PC-3 (cell line): ENCODE measurements at regions of chr6 and their contacts with region 1.

Region 1: DNA sequence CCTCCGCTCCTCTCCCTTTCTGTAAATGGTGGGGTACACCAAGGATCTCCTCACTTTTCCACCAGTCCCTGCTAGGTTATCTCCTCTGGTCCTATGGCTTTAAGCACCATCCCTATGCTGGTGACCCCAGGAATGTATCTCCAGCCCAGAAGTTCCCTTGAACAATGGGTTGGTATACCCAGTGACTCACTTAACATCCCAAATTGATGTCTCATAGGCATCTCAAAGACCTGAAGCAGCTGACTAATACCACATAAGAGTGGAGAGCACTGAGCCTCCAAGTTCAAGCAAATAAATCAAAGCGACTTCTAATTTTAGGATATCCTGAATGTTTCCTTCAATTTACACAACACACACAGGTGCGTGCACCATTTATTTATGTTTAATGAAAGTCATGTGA is 48.3 kb downstream of the ADGRF1 start:
- DNase-seq: peak; percentile 98
- ATAC-seq: peak; percentile 76
- H3K4me3 ChIP-seq: no peak overlapping the region
- H3K27ac ChIP-seq: peak overlapping the region; percentile 84
- H3K4me1 ChIP-seq: peaks cover 73% of the 10 kb centered on the region
- H3K27me3 ChIP-seq: no peaks in the 10 kb centered on the region
- CTCF ChIP-seq: no peak

Region 2: GRCh38 chr6:46419576-46420002 is 574.3 kb before region 1 on chr6:
- CTCF ChIA-PET with region 1: no interaction called
- POLR2A ChIA-PET with region 1: no interaction called
- intact Hi-C with region 1: loop called (anchors 1 kb)
- DNase-seq: peak; percentile 83
- ATAC-seq: 0 out of 2 replicates have a peak, but pooled peaks have one; percentile 43
- H3K4me3 ChIP-seq: no peak overlapping the region
- H3K27ac ChIP-seq: no peak overlapping the region
- H3K4me1 ChIP-seq: peaks cover 8% of the 10 kb centered on the region
- H3K27me3 ChIP-seq: peaks cover 6% of the 10 kb centered on the region; the same call in 1 of the 2 replicates
- CTCF ChIP-seq: peak; percentile 76

Region 3: DNA sequence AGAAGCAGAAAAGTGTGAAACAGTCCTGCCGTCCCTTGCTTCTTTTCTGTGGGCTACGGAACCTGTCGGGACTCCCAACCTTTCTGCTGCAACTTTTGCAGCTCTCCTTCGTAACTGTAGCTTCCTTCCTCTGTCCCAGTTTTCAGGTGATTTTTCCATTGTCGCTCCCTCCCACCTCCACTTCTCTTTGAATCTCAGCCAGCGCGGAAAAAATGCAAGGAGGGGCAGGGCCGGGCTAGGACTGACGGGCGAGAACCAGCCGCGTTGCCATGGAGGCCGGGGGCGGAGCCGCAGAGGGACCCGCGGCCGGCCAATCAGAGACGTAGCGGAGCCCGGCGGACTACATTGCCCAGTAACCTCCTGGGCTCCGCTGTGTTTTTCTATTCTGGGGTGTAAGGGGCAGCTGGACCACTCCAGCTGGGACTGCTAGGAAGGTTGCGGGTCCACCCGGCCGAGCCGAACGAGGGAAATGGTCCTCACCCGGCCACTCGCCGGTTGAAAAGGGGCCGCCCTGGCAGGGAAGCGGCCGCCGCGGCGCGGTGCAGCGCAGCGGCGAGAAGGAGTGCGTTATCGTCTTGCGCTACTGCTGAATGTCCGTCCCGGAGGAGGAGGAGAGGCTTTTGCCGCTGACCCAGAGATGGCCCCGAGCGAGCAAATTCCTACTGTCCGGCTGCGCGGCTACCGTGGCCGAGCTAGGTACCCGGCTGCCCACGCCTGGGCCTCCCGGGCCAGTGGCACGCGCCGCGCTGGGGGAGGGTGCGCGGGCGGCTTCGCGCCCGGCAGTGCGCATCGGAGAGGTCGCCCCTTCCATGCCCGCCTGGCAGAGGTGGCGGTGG is 341.0 kb before region 1 on chr6 and contains the starts of genes CYP39A1 and SLC25A27:
- CTCF ChIA-PET with region 1: no interaction called
- POLR2A ChIA-PET with region 1: no interaction called
- intact Hi-C with region 1: loop called (anchors 2 kb)
- DNase-seq: peak; percentile 96
- ATAC-seq: peak; percentile 97
- H3K4me3 ChIP-seq: peak within 1 kb of the TSS; percentile 91
- H3K27ac ChIP-seq: no peak within 1 kb of the TSS
- H3K4me1 ChIP-seq: peaks cover 27% of the 10 kb centered on the region
- H3K27me3 ChIP-seq: no peaks in the 10 kb centered on the region
- CTCF ChIP-seq: no peak
- total RNA-seq, gene CYP39A1: 0.66 and 1.2 TPM in 2 replicates
- total RNA-seq, gene SLC25A27: 3.8 and 13.6 TPM in 2 replicates

Region 4: GRCh38 chr6:46781478-46782378 is 212.1 kb before region 1 on chr6:
- CTCF ChIA-PET with region 1: no interaction called
- POLR2A ChIA-PET with region 1: interaction called, 3 read pairs
- intact Hi-C with region 1: loop called (anchors 1 kb)
- DNase-seq: peak; percentile 87
- ATAC-seq: peak; percentile 88
- H3K4me3 ChIP-seq: no peak overlapping the region
- H3K27ac ChIP-seq: no peak overlapping the region
- H3K4me1 ChIP-seq: no peaks in the 10 kb centered on the region
- H3K27me3 ChIP-seq: no peaks in the 10 kb centered on the region
- CTCF ChIP-seq: peak; percentile 86

Region 5: DNA sequence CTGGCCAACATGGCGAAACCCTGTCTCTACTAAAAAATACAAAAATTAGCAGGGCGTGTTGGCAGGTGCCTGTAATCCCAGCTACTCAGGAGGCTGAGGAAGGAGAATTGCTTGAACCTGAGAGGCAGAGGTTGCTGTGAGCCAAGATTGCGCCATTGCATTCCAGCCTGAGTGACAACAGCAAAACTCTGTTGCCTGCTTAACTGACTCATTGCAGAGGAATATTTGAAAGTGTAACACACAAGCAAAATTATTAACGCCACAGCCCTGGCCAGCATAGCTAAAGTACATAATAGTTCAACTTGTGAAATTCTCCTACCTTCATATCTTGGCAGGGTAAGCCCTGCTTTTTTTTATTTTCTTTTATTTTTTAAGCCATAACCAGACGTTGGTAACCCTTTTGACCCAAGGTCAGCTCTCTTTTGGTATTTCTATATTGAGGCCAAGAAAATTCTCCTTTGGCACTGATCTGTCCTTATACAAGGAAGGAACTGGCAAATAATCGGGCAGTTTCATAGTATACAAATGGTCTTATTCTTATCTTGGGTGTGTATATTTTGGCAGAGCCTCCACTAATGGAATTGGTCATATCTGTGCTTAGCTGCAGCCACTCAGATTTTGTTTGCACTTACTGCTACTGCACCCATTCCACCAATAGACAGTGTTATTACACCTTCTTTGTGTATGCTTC is 68.1 kb before region 1 on chr6:
- CTCF ChIA-PET with region 1: no interaction called
- POLR2A ChIA-PET with region 1: no interaction called
- intact Hi-C with region 1: loop called (anchors 2 kb)
- DNase-seq: peak; percentile 91
- ATAC-seq: peak; percentile 80
- H3K4me3 ChIP-seq: peak overlapping the region; percentile 14; the same call in 1 of the 2 replicates
- H3K27ac ChIP-seq: peak overlapping the region; percentile 97
- H3K4me1 ChIP-seq: peaks cover 42% of the 10 kb centered on the region
- H3K27me3 ChIP-seq: no peaks in the 10 kb centered on the region
- CTCF ChIP-seq: no peak

Region 6: GRCh38 chr6:47047479-47048407 is 53.9 kb after region 1 on chr6:
- CTCF ChIA-PET with region 1: interaction called, 3 read pairs
- POLR2A ChIA-PET with region 1: interaction called, 4 read pairs
- intact Hi-C with region 1: loop called (anchors 1 kb)
- DNase-seq: peak; percentile 97
- ATAC-seq: peak; percentile 57
- H3K4me3 ChIP-seq: no peak overlapping the region
- H3K27ac ChIP-seq: peak overlapping the region; percentile 95
- H3K4me1 ChIP-seq: peaks cover 54% of the 10 kb centered on the region
- H3K27me3 ChIP-seq: no peaks in the 10 kb centered on the region
- CTCF ChIP-seq: peak; percentile 94

Region 7: DNA sequence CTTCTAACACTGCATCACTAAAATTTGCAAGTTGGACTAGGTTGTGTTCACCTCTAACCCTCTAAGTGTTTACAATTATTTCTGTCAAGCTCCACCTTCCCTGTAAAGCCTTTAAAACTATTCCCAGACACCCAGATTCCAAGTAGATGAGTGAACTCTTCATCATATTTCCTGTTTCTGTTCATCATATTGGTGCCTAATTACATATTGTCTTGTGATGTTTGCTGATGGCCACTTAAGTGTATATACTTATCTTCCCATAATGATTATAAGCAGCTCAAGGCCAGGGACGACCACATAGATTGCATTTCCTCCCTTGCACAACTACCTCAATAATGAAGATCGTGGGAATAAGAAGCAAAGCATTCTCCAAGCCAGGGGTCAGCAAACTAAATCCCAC is 299.1 kb after region 1 on chr6:
- CTCF ChIA-PET with region 1: no interaction called
- POLR2A ChIA-PET with region 1: no interaction called
- intact Hi-C with region 1: no loop called
- DNase-seq: peak; percentile 47
- ATAC-seq: peak; percentile 56
- H3K4me3 ChIP-seq: no peak overlapping the region
- H3K27ac ChIP-seq: peak overlapping the region; percentile 6; the same call in 1 of the 2 replicates
- H3K4me1 ChIP-seq: peaks cover 25% of the 10 kb centered on the region
- H3K27me3 ChIP-seq: no peaks in the 10 kb centered on the region
- CTCF ChIP-seq: no peak